ENCODE measurements at regions of chr2 and their contacts with region 1.

Region 1: GRCh38 chr2:195590861-195591205 is 66.2 kb upstream of the SLC39A10 start:
- DNase-seq: no peak
- H3K4me3 Mint-ChIP-seq: no peak overlapping the region
- H3K27ac Mint-ChIP-seq: no peak overlapping the region
- H3K4me1 Mint-ChIP-seq: peaks cover 23% of the 10 kb centered on the region
- H3K27me3 Mint-ChIP-seq: no peaks in the 10 kb centered on the region

Region 2: DNA sequence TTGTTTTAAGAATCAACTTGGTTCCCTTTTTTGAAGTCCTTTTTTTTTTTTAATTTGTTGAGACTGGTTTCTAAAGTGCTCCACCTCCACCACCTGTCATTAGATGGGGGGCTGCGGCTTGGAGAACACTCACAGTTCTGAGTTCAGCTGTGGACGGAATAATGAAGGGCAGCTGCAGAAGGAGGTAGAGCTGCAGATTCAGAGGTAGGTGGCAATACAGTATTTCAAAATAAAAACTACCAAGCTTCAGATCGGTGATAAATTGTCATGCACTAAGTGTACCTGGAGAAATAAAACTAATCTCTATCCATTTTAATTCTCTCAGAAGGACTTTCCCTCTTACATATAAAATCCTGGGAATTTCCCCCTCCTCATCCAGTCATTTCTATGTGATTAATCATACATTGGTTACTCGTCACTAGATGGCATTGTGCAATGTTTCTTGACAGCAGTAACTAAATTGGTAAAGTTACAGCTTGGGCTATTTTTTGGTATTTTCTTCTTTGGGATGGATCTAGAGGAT is 14.9 kb before region 1 on chr2:
- intact Hi-C with region 1: loop called (anchors 2 kb)
- DNase-seq: no peak
- H3K4me3 Mint-ChIP-seq: no peak overlapping the region
- H3K27ac Mint-ChIP-seq: peak overlapping the region; percentile 13
- H3K4me1 Mint-ChIP-seq: peaks cover 58% of the 10 kb centered on the region
- H3K27me3 Mint-ChIP-seq: no peaks in the 10 kb centered on the region